Left cardiac atrium (tissue), 4 donors: ENCODE measurements at regions of chr6 and their contacts with region 1.

Region 1: DNA sequence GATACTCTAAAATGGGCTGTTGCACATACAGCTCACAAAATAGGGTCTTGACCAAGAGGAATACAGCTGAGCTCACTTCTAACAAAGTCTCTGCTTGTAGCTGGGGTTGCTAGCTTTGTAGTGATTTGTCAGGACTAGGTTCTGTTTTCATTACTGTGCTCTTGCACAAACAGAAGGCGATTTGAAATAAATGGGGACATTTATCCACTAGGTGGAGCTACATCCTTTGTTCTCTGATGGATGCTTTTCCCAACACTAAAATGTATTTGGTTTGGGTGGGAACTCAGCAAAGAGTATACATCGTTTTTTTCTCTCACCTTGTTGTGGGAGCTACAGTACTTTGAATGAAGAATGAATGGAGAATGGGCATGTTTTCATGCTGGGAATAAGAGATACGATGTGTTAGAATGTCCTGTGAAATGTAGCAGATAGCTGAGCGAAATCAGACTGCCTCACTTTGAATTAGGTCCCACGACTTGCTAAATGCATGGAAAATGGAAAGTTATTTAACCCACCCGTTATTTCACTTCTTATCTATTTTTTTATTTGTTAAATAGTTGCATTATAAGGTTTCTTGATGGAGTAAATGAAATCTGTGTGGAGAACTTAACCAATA is 494.7 kb upstream of the MAP3K7 start:
- DNase-seq: no peak
- ATAC-seq: peak in 1 of 2 donors; percentile 58

Region 2: GRCh38 chr6:90559931-90560330 is 521.6 kb before region 1 on chr6:
- intact Hi-C with region 1: no loop called
- DNase-seq: no peak
- ATAC-seq: no peak

Region 3: GRCh38 chr6:92777146-92777740 is 1695.7 kb after region 1 on chr6:
- intact Hi-C with region 1: loop called in 1 of 2 experiments (anchors 10 kb)
- DNase-seq: no peak
- ATAC-seq: no peak